A549 (cell line): ENCODE measurements at regions of chr22 and their contacts with region 1.

Region 1: GRCh38 chr22:36528795-36529751 is at the start of gene EIF3D:
- DNase-seq: peak; percentile 73 to 99
- ATAC-seq: peak; percentile 94 to 96
- H3K4me3 ChIP-seq: peak within 1 kb of the TSS; percentile 98
- H3K27ac ChIP-seq: peak within 1 kb of the TSS; percentile 94 to 100
- H3K4me1 ChIP-seq: peaks cover 17% of the 10 kb centered on the region
- CTCF ChIP-seq: no peak
- EP300 ChIP-seq: no peak
- POLR2A ChIP-seq: peak; percentile 61
- RAD21 ChIP-seq: no peak
- polyA plus RNA-seq, gene EIF3D: 304 and 326 TPM in 2 replicates

Region 2: GRCh38 chr22:36481393-36482168 is 47.5 kb before region 1 on chr22 and contains the start of gene TXN2:
- CTCF ChIA-PET with region 1: no interaction called
- POLR2A ChIA-PET with region 1: no interaction called
- DNase-seq: peak; percentile 88 to 94
- ATAC-seq: peak; percentile 95 to 98
- H3K4me3 ChIP-seq: peak within 1 kb of the TSS; percentile 63
- H3K27ac ChIP-seq: peak within 1 kb of the TSS; percentile 89 to 99
- H3K4me1 ChIP-seq: peaks cover 6% of the 10 kb centered on the region; the same call in 1 of the 3 replicates
- CTCF ChIP-seq: no peak
- EP300 ChIP-seq: no peak
- POLR2A ChIP-seq: peak; percentile 66
- RAD21 ChIP-seq: no peak
- polyA plus RNA-seq, gene TXN2: 84.5 and 89.6 TPM in 2 replicates

Region 3: DNA sequence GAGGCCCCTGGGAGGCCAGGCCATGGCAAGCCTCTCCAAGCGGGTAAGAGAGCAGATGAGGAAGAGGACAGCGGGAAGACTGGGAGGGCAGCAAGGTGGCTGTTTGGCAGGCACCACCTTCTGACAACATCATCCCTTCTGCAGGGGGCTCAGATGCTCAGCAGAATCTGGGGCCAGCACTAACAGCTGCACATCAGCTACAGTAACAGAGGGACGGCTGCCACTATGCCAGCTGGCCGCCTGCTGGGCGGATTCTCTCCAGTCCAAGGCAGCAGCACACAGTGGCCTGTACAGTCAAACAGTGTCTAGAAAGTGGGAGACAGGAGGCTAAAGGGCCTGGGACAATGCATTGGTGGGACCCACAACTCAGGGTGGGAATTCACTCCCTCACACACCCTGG is 37.0 kb before region 1 on chr22:
- CTCF ChIA-PET with region 1: no interaction called
- POLR2A ChIA-PET with region 1: interaction called, 11 read pairs
- DNase-seq: no peak
- ATAC-seq: no peak
- H3K4me3 ChIP-seq: no peak overlapping the region
- H3K27ac ChIP-seq: no peak overlapping the region
- H3K4me1 ChIP-seq: no peaks in the 10 kb centered on the region
- CTCF ChIP-seq: no peak
- EP300 ChIP-seq: no peak
- POLR2A ChIP-seq: no peak
- RAD21 ChIP-seq: no peak

Region 4: DNA sequence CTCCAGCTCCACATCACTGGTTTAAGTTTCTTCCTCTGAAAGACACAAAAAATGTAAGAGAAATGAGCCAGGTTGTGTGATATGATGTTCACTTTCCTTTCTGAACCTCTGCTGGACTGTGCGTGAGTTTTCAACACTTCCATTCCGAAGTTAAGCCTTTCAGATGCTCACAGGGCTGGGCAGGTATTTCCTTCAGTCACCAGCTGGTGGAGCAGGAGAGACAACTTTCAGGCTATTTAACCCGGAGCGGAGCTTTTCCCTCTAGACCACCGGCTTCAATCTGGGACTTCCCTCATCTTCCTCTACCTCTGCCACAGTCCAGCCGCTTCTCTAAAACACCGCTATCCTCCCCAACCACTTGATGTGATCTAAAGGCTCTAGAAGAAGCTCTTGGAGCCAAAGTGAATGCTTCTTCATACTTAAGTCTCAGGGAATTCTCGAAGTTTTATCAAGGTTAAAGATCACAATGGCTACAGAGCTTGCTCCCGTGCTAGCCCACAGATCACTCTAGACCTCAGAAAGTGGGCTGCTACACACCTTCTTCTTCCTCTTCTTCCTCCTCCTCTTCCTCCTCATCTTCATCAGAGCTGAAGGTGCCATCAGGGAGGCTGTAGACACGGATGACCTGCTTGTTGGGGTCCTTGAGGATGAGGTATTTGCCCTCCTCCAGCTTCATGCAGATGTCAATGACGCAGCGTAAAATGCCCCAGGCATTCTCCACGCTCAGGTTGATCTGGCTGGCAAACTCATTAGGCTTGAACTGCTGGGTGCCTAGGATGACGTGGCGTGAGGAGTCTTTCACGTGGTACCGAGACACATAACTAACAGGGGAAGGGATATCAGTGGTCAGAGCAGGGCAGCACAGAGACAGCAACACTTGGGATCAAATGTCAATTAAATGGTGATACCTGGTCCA is 17.8 kb before region 1 on chr22:
- CTCF ChIA-PET with region 1: interaction called, 42 read pairs
- POLR2A ChIA-PET with region 1: interaction called, 14 read pairs
- DNase-seq: peak; percentile 52 to 55
- ATAC-seq: peak; percentile 70 to 72
- H3K4me3 ChIP-seq: no peak overlapping the region
- H3K27ac ChIP-seq: no peak overlapping the region
- H3K4me1 ChIP-seq: peaks cover 9% of the 10 kb centered on the region
- CTCF ChIP-seq: peak; percentile 42
- EP300 ChIP-seq: no peak
- POLR2A ChIP-seq: no peak
- RAD21 ChIP-seq: peak in 1 of 2 experiments; percentile 46; a peak in 2 of 5 replicates

Region 5: DNA sequence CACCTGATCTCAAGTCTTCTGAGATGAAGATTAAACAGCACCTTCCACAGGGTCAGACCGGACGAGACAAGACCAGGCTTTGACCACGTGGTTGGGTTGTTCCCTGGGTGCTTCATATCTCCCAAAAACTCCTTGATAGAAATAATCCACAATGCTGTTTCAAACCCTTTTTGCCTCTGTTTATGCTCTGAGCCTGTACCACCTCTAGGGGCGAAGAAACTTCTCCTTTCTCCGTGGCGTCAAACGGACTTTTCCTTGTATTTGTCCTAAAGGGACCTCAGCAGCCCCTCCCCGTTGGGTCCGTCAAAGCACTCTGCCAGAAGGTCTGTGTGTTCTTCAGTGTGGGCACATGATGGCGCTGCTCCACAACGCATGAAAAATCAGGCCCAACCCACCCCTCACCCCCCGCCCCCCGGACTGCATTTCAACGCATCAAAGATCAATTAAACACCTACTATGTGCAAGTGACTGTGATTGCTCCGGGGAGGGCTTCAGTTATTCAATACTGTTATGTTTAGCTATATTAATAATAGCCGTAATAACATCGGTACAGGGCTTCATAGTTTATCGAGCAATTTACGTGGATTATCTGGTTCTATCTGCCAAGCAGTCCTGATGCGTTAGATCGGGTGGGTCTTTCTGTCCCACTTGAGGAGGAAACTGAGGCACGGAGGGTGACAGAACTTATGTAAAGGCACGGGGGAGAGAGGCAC is 17.2 kb after region 1 on chr22:
- CTCF ChIA-PET with region 1: interaction called, 12 read pairs
- POLR2A ChIA-PET with region 1: interaction called, 11 read pairs
- DNase-seq: peak; percentile 67 to 78
- ATAC-seq: peak; percentile 76 to 84
- H3K4me3 ChIP-seq: peak overlapping the region; percentile 36
- H3K27ac ChIP-seq: peak overlapping the region; percentile 58 to 79
- H3K4me1 ChIP-seq: peaks cover 34% of the 10 kb centered on the region
- CTCF ChIP-seq: peak; percentile 80
- EP300 ChIP-seq: no peak
- POLR2A ChIP-seq: no peak
- RAD21 ChIP-seq: peak; percentile 73 to 94

Region 6: DNA sequence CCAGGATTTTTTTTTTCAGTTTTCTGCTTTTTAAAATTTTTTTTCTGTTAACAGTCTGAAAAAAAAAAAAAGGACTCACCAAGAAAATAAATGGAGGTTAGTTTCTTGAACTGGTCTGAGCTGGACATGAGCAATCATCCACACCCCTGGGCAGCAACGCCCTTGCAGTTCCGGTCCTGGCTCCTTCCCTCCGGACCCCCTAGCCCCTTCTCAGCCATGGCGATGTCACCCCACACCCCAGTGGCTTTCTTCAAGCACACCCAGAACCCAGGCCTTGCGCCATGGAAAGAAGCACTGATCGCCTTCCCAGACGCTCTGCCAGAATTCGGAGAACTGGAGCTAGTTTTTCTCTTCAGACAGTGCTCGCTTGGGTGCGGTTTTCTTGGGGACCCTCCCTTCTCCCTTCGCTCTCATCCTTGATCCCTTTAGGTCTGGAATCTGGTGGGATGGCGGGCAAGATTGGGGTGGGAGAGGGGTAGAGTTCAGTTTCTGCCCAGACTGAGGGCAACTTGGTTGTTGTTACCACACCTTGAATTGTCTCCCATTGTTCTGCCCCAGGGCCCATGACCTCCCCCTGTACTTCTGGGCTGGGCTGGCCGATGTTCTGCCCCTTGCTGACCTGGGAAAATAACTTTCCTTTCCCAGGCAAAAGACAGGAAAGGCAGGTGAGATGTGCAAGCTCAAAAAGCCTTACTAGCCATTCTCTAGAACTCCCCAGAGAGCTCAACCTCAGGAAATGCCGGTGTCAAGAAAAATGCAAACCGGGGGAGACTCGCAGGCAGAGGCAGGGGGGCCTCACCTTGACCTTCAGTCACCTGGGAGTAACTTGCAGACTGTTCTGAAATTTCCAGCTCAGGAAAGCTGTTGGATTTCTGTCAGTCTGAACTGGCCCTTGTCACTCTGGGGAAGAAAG is 32.1 kb after region 1 on chr22:
- CTCF ChIA-PET with region 1: no interaction called
- POLR2A ChIA-PET with region 1: no interaction called
- DNase-seq: no peak
- ATAC-seq: no peak
- H3K4me3 ChIP-seq: no peak overlapping the region
- H3K27ac ChIP-seq: no peak overlapping the region
- H3K4me1 ChIP-seq: peaks cover 15% of the 10 kb centered on the region
- CTCF ChIP-seq: no peak
- EP300 ChIP-seq: no peak
- POLR2A ChIP-seq: no peak
- RAD21 ChIP-seq: no peak